ENCODE measurements at regions of chr16 and their contacts with region 1.

Region 1: DNA sequence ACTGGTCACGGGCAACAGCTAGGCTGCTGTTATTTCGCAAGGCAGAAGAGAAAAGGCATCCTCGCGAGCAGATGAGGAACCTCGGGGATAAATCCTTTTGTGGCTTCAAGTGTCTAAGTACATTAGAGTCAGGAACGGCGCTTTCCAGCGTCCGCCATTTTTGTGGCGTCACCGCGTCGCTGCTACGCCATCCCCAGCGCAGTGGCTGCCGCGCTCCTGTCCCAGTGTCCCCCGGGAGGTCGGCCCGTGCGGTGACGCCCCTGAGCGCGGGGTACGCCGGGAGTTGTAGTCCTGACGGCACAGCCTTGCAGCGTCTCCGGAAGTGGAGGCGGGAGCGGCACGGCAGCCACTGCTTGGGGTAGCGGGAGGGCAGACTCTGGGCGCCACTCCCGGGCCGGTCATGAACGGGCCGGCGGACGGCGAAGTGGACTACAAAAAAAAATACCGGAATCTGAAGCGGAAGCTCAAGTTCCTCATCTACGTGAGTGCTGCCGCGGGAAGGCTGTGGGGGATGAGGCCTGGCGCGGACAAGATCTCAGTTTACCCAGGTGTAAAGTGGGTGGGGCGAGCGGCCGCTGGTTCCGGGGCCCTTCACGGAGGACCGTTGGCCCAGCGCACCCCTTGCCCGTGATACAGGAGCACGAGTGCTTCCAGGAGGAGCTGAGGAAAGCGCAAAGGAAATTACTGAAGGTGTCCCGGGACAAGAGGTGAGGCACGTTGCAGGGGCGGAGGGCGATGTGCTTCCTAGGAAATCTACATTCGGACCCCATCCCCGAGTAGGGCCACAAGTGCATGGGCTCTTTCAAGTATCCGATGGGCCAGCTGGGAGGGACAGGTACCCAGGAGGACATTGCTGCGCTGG is at the start of gene INO80E:
- DNase-seq: peak; percentile 99
- H3K4me3 ChIP-seq: peak within 1 kb of the TSS; percentile 83 to 91 (median 87)
- H3K27ac ChIP-seq: peak within 1 kb of the TSS; percentile 96 to 99 (median 96)
- H3K4me1 ChIP-seq: peaks cover 24 to 33% (median 27%) of the 10 kb centered on the region in 4 donors
- H3K27me3 ChIP-seq: no peaks in the 10 kb centered on the region
- CTCF ChIP-seq: no peak
- EP300 ChIP-seq: no peak
- POLR2A ChIP-seq: peak; percentile 4
- total RNA-seq, gene INO80E: 38.2 to 58.1 (median 43.5) TPM

Region 2: DNA sequence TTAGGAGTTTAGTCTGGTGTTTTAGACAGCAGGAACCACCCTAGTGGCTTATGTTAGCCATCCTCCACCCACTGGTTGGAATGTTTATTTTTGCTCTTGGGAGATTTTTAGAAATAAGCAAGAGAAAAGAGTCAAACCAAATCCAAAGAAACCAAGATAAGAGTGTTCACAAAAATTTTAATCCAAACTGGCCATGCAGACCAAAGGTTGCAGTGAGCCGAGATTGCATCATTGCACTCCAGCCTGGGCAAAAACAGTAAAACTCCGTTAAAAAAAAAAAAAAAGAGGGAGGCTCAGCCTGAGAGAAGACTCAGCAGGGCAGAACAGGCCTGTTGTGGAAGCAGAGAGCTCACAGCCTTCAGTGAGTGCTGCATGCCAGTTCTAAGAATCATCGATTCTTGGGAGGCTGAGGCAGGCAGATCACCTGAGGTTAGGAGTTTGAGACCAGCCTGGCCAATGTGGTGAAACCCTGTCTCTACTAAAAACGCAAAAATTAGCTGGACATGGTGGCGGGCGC is 238.1 kb before region 1 on chr16:
- intact Hi-C with region 1: no loop called
- DNase-seq: no peak
- H3K4me3 ChIP-seq: no peak overlapping the region
- H3K27ac ChIP-seq: no peak overlapping the region
- H3K4me1 ChIP-seq: no peaks in the 10 kb centered on the region
- H3K27me3 ChIP-seq: no peaks in the 10 kb centered on the region
- CTCF ChIP-seq: no peak
- EP300 ChIP-seq: no peak
- POLR2A ChIP-seq: no peak

Region 3: GRCh38 chr16:29790183-29790952 is 205.8 kb before region 1 on chr16 and contains the start of gene KIF22:
- intact Hi-C with region 1: loop called (anchors 10 kb)
- DNase-seq: peak; percentile 100
- H3K4me3 ChIP-seq: peak within 1 kb of the TSS; percentile 76 to 93 (median 91)
- H3K27ac ChIP-seq: peak within 1 kb of the TSS; percentile 81 to 91 (median 88)
- H3K4me1 ChIP-seq: peaks cover 17 to 31% (median 22%) of the 10 kb centered on the region in 4 donors
- H3K27me3 ChIP-seq: no peaks in the 10 kb centered on the region
- CTCF ChIP-seq: peak; percentile 60 to 84 (median 83)
- EP300 ChIP-seq: no peak
- POLR2A ChIP-seq: peak; percentile 43
- total RNA-seq, gene KIF22: 10.8 to 12.3 (median 11.8) TPM

Region 4: GRCh38 chr16:29848420-29849297 is 147.5 kb before region 1 on chr16:
- intact Hi-C with region 1: no loop called
- DNase-seq: no peak
- H3K4me3 ChIP-seq: no peak overlapping the region
- H3K27ac ChIP-seq: peak overlapping the region in 3 of 4 donors; percentile 14 to 60 (median 40)
- H3K4me1 ChIP-seq: peaks cover 0 to 42% (median 24%) of the 10 kb centered on the region in 4 donors
- H3K27me3 ChIP-seq: no peaks in the 10 kb centered on the region
- CTCF ChIP-seq: peak in 2 of 3 experiments; percentile 79
- EP300 ChIP-seq: no peak
- POLR2A ChIP-seq: no peak

Region 5: GRCh38 chr16:29973384-29974246 is 22.5 kb before region 1 on chr16 and contains the start of gene TAOK2:
- intact Hi-C with region 1: loop called (anchors 1 kb)
- DNase-seq: peak; percentile 99
- H3K4me3 ChIP-seq: peak within 1 kb of the TSS; percentile 64 to 98 (median 81)
- H3K27ac ChIP-seq: peak within 1 kb of the TSS; percentile 84 to 93 (median 90)
- H3K4me1 ChIP-seq: peaks cover 40 to 50% (median 46%) of the 10 kb centered on the region in 4 donors
- H3K27me3 ChIP-seq: no peaks in the 10 kb centered on the region
- CTCF ChIP-seq: peak in 1 of 3 experiments; percentile 27
- EP300 ChIP-seq: no peak
- POLR2A ChIP-seq: peak; percentile 76
- total RNA-seq, gene TAOK2: 40.9 to 63.6 (median 51.4) TPM